Stomach (tissue), 19 donors: ENCODE measurements at regions of chr1 and their contacts with region 1.

Region 1: DNA sequence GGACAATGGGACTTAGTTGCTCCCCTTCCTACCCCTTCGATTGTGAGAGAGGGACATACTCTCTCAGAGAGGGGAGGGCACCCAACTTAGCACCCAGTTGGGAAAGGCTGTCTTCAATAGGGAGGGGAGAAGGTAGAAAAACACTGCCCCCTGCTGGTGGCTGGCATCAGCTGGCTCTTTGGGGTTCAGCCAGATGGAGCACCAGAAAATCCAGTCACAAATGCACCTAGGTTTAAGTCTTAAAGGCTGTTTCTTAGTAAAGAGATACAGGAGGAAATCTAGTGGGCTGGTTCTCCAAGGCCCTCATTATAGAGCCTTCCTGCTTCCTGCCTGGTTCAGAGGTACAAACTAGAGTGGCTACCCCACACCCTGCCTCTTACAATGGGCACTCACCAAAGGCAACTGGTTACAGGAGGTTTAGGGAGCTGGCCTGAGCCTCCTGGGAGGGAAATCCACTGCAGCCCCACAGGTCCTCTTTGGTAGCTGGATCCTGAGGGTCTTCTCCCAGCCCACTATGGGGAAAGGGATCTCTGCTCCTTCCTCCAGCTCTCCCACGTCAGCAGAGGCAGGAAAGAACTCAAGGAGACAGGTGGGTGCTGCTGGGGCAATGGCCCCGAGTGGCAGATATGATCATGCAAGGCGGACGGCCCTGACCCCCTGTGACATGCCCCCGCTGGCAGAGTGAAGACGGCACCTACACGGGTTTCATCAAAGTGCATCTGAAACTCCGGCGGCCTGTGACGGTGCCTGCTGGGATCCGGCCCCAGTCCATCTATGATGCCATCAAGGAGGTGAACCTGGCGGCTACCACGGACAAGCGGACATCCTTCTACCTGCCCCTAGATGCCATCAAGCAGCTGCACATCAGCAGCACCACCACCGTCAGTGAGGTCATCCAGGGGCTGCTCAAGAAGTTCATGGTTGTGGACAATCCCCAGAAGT is 28.3 kb downstream of the EIF2D start:
- DNase-seq: peak; percentile 83 to 87
- H3K4me3 ChIP-seq: no peak overlapping the region
- H3K27ac ChIP-seq: peak overlapping the region in 3 of 5 donors; percentile 39 to 62 (median 60)
- H3K4me1 ChIP-seq: peaks cover 0 to 72% (median 25%) of the 10 kb centered on the region in 4 donors
- H3K27me3 ChIP-seq: no peaks in the 10 kb centered on the region
- CTCF ChIP-seq: peak in 6 of 7 experiments; percentile 66 to 94 (median 87)
- EP300 ChIP-seq: no peak
- POLR2A ChIP-seq: no peak

Region 2: DNA sequence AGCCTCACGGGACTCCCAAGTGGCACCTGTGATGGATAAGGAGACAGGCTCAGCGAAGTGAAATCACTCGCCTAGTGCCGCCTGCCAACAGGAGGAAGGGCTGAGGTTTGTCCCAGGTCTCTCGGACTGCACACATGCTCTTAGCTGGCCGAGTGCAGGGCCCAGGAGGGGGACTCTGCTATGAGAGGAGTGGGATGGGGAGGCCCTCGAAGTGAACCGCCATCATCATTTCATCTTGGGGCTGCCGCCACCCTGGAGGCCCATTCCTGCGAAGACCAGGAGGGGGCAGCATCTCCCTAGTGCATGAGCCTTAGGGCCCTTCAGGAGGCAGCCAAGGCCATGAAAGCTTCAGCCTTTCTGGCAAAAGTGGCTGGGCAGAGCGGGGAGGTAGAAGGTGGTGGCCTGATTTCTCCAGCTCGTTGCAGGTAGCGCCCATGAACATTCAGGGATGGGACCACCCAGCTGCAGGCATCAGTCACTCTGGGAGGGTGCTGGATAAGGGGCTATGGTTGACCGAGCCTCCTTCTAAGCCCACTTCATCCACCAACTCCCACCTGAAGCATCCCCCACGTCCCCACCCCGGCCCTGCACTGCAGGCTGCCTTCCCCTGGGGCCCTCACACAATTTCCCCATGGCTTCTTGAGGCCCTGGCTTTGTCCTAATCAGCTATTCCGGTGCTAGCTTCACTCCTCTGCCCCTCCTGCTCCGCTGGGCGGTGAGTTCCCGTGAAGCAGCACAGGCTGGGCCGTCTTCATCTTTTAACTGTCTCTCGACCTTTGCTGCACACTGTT is 93.8 kb before region 1 on chr1:
- intact Hi-C with region 1: loop called (anchors 5 kb)
- DNase-seq: peak; percentile 84 to 89
- H3K4me3 ChIP-seq: no peak overlapping the region
- H3K27ac ChIP-seq: no peak overlapping the region
- H3K4me1 ChIP-seq: peaks cover 2 to 19% (median 13%) of the 10 kb centered on the region in 4 donors
- H3K27me3 ChIP-seq: no peaks in the 10 kb centered on the region
- CTCF ChIP-seq: peak in 5 of 7 experiments; percentile 89 to 95 (median 93)
- EP300 ChIP-seq: no peak
- POLR2A ChIP-seq: no peak

Region 3: DNA sequence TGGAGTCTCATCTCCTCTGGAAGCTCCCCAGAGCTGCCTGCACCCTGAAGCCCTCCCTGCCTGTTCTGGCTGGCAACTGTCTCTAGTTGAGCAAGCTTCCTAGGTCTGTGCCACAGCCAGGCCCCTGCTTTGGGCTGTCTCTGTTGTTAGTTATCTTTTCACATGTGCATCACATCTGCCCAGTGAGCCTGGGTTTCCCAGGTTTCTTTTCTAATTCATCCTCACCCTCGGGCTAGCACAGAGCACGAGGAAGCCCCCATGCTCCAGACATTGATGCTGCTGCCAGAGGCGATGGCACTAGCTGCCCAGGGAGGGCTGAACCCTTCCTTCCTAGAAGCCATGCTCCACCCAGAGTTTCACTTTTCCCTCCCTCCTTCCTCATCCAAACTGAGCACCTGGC is 49.4 kb before region 1 on chr1:
- intact Hi-C with region 1: no loop called
- DNase-seq: no peak
- H3K4me3 ChIP-seq: no peak overlapping the region
- H3K27ac ChIP-seq: peak overlapping the region; percentile 24 to 80 (median 75)
- H3K4me1 ChIP-seq: peaks cover 10 to 62% (median 49%) of the 10 kb centered on the region in 4 donors
- H3K27me3 ChIP-seq: no peaks in the 10 kb centered on the region
- CTCF ChIP-seq: no peak
- EP300 ChIP-seq: no peak
- POLR2A ChIP-seq: no peak

Region 4: DNA sequence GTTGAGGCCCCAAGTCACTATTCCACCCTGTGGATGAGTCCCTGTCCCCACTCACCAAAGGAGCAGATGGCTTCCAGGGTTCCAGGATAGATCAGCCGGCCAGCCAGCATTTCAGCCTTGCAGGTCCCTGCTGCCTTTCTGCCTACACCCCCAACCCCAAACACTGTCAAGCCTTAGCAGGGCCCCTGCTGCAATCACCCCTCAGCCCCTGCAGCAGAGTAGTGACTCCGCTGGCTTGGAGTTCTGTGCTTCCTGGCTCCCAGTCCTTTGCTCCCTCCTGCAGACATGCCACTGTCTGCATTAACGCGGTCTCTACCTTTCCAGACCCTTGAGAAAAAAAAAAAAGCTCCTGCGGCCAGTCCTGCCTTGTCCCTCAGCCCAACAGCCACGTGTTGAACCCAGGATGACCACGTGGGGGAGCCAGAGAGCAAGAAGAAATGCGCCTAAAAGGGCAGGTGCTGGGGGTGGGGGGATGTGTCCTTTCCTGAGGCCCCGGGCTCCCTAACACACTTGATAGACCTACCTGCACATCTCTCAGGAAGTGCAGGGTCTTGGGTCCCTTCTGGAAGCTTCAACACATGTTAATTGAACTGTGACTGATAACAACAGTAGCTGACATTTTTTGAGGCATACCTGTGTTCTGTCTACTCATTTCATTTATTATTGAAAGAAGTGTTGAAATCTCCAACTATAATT is 39.3 kb before region 1 on chr1:
- intact Hi-C with region 1: loop called (anchors 5 kb)
- DNase-seq: peak; percentile 80 to 85
- H3K4me3 ChIP-seq: no peak overlapping the region
- H3K27ac ChIP-seq: no peak overlapping the region
- H3K4me1 ChIP-seq: peaks cover 23 to 30% (median 25%) of the 10 kb centered on the region in 4 donors
- H3K27me3 ChIP-seq: no peaks in the 10 kb centered on the region
- CTCF ChIP-seq: peak in 5 of 7 experiments; percentile 81 to 88 (median 85)
- EP300 ChIP-seq: no peak
- POLR2A ChIP-seq: no peak

Region 5: DNA sequence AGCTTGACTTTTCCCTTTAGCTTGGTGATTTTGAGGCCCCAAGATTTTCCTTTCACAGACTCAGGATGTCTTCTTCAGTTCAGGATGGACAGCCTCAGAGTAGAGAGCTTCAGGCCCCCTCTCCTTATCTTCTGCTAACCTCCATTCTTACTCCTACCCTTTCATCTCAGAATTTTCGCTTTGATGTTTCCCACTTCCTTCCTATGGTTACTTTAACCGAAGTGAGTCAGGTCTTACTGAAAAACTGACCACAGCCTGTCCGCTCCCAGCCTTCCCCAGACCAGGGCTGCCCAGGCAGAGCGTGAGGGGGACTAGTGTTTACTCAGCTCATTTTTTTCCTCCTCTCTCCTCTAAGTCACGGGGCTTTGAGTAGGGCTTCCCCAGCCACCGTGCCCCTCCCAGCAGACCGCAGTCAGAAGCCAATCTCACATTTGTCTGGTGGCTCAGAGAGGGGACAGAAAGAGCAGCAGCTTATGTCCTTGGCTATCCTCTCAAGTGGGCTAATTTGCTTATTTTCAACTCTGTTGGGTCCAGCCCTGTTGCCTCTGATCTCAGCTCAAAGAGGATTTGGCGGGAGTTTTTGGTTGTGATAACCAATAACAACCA is 182.4 kb after region 1 on chr1:
- intact Hi-C with region 1: no loop called
- DNase-seq: peak; percentile 37 to 64
- H3K4me3 ChIP-seq: no peak overlapping the region
- H3K27ac ChIP-seq: peak overlapping the region in 1 of 5 donors; percentile 46
- H3K4me1 ChIP-seq: peaks cover 0 to 30% (median 0%) of the 10 kb centered on the region in 4 donors
- H3K27me3 ChIP-seq: no peaks in the 10 kb centered on the region
- CTCF ChIP-seq: no peak
- EP300 ChIP-seq: no peak
- POLR2A ChIP-seq: no peak